ENCODE measurements at regions of chr1 and their contacts with region 1.

Region 1: DNA sequence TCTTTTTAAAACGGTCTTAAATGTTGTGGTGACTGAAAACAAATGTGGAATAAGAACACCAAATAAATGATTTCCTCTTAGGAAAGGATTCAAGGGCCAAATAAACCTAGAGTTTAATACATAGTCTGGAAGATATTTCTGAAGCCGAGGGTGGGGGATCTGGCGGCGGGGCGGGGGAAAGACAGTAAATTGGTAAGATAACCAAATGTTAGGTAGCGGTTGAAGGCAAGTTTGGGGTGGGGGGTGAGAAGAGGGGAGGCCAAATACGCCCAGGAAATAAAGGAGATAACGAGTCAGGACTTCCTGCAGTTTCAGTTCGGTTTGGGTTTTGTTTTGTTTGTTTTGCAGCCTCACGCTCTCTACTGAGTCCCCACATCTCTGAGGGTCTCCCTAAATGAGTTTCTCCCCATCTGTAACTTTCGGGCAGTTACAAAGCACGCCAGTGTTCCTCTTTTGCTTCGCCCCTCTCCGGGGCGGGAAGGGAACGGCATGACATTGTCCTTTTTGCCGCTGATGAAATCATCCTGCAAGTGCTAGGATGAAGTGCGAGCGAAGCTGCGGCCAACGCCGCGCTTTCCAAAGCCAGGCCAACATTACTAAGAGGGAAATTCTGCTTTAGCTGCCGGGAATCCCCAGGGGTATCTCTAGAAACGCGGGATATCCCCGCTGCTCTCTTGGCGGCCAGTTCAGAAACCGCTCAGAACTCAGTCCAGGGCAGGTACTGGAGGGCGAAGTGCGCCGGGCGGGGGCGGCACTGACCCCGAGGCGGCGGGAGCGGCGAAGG is 844 bp downstream of the NIBAN1 start:
- DNase-seq: peak; percentile 73
- ATAC-seq: peak; percentile 61

Region 2: DNA sequence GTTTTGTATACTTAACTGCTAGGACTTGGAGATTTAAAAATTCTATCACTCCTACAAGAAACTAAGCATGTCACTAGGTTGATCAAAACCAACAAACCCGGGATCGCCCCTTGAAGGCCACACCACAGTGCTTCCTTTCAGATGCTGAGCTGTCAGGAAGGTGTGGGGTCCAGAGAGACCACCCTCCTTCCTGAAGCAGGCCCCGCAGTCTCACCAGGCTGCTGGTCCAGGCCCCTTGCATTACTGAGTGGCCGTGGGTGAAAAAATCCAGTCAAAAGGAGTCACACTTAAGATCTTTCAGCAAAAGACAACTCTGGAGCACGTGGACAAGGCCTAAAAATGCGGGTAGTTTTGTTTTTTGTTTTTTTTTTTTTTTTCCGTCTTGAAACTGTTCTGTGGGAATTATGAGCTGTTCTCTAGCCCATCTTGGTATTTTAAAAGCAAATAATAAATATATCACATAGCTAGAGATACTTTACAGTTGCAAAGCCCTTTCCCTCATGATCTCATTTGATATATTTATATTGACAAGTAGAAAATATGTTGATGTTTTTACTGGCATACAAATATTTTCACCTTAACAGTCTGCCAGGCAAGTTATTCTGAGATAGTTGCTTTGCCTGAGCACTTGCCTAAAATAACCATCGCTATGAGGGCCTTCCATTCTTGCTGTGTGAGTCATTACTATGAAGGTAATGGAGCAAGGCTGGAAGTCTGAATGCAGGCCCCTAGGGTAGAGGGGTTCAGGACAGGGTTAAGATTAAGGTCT is 145.7 kb before region 1 on chr1:
- intact Hi-C with region 1: loop called (anchors 5 kb)
- DNase-seq: no peak
- ATAC-seq: peak; percentile 84

Region 3: GRCh38 chr1:185091480-185091879 is 118.0 kb after region 1 on chr1:
- intact Hi-C with region 1: no loop called
- DNase-seq: no peak
- ATAC-seq: no peak

Region 4: GRCh38 chr1:185229981-185230380 is 256.5 kb after region 1 on chr1:
- intact Hi-C with region 1: no loop called
- DNase-seq: no peak
- ATAC-seq: no peak

Measured in left ventricle myocardium superior (tissue), 1 donor.